ENCODE measurements at regions of chr22 and their contacts with region 1.

Region 1: DNA sequence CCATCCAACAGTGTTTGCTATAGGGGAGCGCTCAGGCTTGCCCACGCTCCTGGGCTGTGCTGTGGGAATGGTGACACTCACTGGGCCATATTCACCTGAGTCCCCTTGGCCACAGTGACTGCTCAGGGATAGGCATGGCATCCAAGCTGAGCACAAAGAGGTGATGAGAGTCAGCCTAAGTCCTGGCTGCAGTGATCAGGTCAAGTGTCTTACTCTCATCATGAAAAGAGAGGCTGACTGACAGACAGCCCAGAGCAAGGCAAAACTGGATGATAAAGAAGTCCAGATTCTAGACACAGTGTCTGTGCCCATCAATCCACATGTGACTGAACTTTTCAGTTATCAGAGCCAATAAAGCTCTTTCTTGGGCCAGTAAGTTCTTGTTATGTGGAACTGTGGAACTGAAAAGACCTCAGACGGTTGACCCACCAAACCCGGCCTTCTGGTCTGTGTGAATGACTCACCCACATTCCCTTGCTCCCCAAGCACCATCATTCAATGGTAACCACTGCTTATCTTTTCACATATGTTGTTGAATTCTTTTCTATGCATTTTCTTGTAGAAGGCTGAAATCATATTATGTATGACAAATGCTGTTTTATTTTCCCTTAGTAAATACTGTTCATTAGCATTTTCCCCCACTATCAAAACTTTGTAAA is 43.2 kb upstream of the YPEL1 start:
- DNase-seq: peak; percentile 14
- H3K4me3 ChIP-seq: no peak overlapping the region
- H3K27ac ChIP-seq: no peak overlapping the region
- H3K4me1 ChIP-seq: no peaks in the 10 kb centered on the region
- H3K27me3 ChIP-seq: no peaks in the 10 kb centered on the region
- CTCF ChIP-seq: no peak

Region 2: DNA sequence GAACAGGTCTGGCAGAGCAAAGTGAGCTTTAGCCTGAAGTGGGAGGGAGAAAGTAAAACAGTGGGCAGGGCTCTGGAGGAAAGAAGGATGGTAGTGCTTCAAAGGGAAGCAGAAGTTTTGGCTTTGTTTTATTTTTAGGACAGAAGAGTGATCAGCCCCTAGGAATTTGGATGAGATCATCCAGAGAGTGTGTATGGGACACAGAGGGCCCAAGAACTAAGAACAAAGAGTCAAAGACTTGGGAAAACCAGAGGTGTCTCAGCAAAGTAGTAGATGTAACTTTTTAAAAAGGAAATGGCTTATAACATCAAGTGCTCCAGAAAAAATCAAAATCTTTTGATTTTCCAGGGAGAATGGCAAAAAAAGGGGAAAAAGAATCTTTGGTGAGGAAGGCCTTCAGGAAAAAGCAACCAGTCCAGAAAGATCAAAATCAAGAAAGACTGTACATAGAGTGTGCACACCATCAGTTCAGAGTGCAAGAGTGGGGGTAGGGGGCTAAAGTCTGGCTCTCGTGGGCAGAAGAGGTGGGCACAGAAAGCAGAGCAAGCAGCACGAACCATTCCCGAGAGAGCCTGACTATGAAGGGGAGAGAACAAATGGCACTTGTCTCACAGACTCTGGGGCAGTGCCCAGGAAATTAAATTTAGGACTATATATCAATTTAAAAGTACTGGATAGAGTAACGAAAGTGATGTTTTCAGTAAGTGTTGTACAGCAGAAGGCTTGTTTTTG is 58.6 kb after region 1 on chr22:
- CTCF ChIA-PET with region 1: no interaction called
- dilution Hi-C with region 1: no loop called
- in situ Hi-C with region 1: loop called in 1 of 2 experiments (anchors 10 kb)
- intact Hi-C with region 1: no loop called
- DNase-seq: peak; percentile 85
- H3K4me3 ChIP-seq: no peak overlapping the region
- H3K27ac ChIP-seq: peak overlapping the region; percentile 67
- H3K4me1 ChIP-seq: peaks cover 12% of the 10 kb centered on the region
- H3K27me3 ChIP-seq: no peaks in the 10 kb centered on the region
- CTCF ChIP-seq: no peak